ENCODE measurements at regions of chr7 and their contacts with region 1.

Region 1: DNA sequence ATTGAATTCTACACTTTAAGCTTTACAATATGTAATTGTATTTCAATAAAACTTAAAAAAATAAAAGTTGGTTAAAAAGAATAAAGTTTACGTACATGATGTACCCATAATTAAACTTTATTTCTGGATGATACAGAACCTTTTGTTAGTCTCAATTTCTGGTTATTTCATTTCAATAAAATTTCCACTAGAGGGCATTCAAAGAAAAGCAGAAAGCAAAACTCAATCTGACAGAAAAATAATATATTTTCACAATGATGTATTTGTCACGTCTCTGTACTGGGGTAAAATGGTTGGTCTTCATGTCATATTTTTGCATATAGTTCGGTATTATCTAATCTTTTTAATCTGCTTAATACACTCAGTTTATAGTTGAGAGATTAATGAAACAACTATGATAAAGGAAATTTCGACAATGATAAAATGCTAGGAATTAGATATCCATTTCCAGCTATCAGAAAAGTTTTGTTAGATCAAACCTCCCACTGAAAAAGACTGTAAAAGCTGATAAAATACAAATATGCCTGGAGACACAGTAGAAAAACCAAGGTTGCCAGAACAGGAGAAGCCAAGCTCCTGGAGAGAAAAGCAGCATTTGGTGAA is 27.4 kb downstream of the ASZ1 start:
- DNase-seq: no peak
- H3K4me3 ChIP-seq: no peak overlapping the region
- H3K4me3 Mint-ChIP-seq: no peak overlapping the region
- H3K27ac Mint-ChIP-seq: no peak overlapping the region
- H3K4me1 ChIP-seq: peaks cover 11% of the 10 kb centered on the region
- H3K4me1 Mint-ChIP-seq: peaks cover 7% of the 10 kb centered on the region
- H3K27me3 ChIP-seq: no peaks in the 10 kb centered on the region
- H3K27me3 Mint-ChIP-seq: no peaks in the 10 kb centered on the region
- CTCF ChIP-seq: peak; percentile 28 to 48

Region 2: DNA sequence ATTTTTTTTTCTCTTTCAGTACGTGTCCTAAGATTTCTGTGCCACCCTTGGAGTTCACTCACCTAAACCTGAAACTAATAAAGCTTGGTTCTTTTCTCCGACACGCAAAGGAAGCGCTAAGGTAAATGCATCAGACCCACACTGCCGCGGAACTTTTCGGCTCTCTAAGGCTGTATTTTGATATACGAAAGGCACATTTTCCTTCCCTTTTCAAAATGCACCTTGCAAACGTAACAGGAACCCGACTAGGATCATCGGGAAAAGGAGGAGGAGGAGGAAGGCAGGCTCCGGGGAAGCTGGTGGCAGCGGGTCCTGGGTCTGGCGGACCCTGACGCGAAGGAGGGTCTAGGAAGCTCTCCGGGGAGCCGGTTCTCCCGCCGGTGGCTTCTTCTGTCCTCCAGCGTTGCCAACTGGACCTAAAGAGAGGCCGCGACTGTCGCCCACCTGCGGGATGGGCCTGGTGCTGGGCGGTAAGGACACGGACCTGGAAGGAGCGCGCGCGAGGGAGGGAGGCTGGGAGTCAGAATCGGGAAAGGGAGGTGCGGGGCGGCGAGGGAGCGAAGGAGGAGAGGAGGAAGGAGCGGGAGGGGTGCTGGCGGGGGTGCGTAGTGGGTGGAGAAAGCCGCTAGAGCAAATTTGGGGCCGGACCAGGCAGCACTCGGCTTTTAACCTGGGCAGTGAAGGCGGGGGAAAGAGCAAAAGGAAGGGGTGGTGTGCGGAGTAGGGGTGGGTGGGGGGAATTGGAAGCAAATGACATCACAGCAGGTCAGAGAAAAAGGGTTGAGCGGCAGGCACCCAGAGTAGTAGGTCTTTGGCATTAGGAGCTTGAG is 79.5 kb after region 1 on chr7 and contains the start of gene CFTR:
- CTCF ChIA-PET with region 1: no interaction called
- POLR2A ChIA-PET with region 1: no interaction called
- intact Hi-C with region 1: loop called (anchors 2 kb)
- DNase-seq: peak; percentile 72 to 79
- H3K4me3 ChIP-seq: peak within 1 kb of the TSS; percentile 82
- H3K4me3 Mint-ChIP-seq: peak within 1 kb of the TSS; percentile 93
- H3K27ac Mint-ChIP-seq: peak within 1 kb of the TSS; percentile 87
- H3K4me1 ChIP-seq: peaks cover 25% of the 10 kb centered on the region; the same call in 1 of the 2 replicates
- H3K4me1 Mint-ChIP-seq: peaks cover 28% of the 10 kb centered on the region
- H3K27me3 ChIP-seq: no peaks in the 10 kb centered on the region
- H3K27me3 Mint-ChIP-seq: no peaks in the 10 kb centered on the region
- CTCF ChIP-seq: no peak
- total RNA-seq, gene CFTR: 130 and 132 TPM in 2 replicates

Region 3: DNA sequence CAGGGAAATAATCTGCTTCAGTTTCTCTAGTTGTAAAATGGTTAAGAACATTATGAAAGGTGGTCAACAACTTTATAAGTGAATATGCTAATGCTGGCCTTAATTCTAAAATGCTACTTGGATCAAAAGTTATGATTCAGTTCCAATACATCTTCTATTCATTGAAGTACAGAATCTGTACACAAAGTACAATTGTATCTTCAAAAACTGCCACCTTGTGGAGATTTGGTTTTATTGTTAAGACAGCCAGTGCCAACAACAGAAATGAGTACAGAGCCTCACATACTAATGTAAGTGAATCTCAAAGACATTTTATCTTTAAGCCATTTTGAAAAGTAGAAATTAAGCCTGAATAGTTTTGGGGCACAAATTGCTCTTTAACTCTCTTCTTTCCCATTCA is 273.9 kb after region 1 on chr7:
- CTCF ChIA-PET with region 1: interaction called, 3 read pairs
- POLR2A ChIA-PET with region 1: no interaction called
- intact Hi-C with region 1: loop called (anchors 5 kb)
- DNase-seq: peak in 1 of 2 experiments; percentile 39
- H3K4me3 ChIP-seq: no peak overlapping the region
- H3K4me3 Mint-ChIP-seq: peak overlapping the region; percentile 65
- H3K27ac Mint-ChIP-seq: peak overlapping the region; percentile 87
- H3K4me1 ChIP-seq: peaks cover 60% of the 10 kb centered on the region
- H3K4me1 Mint-ChIP-seq: peaks cover 59% of the 10 kb centered on the region
- H3K27me3 ChIP-seq: no peaks in the 10 kb centered on the region
- H3K27me3 Mint-ChIP-seq: no peaks in the 10 kb centered on the region
- CTCF ChIP-seq: peak; percentile 22 to 46

Region 4: DNA sequence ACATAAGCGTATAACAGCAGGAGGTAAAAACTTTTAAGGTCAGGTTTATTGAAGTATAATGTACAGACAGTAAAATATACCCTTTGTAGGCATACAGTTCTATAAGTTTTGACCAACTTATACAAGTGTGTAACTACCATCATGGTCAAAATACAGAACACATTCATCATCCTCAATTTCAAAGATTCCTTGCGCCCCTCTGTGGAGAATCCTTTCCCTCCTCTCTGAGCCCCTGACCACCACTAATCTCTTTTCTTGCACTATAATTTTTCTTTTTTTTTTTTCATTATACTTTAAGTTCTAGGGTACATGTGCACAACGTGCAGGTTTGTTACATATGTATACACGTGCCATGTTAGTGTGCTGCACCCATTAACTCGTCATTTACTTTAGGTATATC is 531.4 kb after region 1 on chr7:
- CTCF ChIA-PET with region 1: no interaction called
- POLR2A ChIA-PET with region 1: no interaction called
- intact Hi-C with region 1: loop called (anchors 2 kb)
- DNase-seq: no peak
- H3K4me3 ChIP-seq: no peak overlapping the region
- H3K4me3 Mint-ChIP-seq: no peak overlapping the region
- H3K27ac Mint-ChIP-seq: no peak overlapping the region
- H3K4me1 ChIP-seq: no peaks in the 10 kb centered on the region
- H3K4me1 Mint-ChIP-seq: no peaks in the 10 kb centered on the region
- H3K27me3 ChIP-seq: no peaks in the 10 kb centered on the region
- H3K27me3 Mint-ChIP-seq: no peaks in the 10 kb centered on the region
- CTCF ChIP-seq: no peak

Region 5: DNA sequence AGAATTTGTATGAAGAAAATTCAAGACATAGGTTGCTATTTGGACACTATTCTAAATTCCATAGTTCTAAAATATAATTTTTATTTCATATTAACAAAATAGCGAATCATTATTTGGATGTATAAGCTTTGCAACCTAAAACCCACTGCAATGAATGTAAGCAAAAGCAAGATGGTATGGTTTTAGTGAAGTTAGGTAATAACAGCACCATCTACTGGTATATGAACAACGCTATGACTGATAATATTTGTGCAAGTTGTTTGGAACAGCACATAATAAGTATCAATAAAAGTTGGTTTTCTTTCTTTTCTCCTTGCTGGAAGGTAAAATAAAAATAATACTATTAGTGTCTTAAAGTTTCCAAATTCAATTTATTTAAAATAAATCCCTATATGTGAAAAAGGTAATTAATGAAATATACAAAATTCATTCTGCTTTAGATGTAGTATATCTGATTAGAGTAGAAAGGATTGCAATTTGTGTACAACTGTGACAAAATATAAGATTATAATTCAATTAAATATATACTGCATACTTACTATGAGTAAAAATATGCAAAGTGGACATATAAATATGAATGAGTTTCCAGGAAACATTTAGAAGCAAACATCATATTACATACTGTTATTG is 705.0 kb after region 1 on chr7:
- CTCF ChIA-PET with region 1: no interaction called
- POLR2A ChIA-PET with region 1: no interaction called
- intact Hi-C with region 1: loop called (anchors 2 kb)
- DNase-seq: peak in 1 of 2 experiments; percentile 7
- H3K4me3 ChIP-seq: no peak overlapping the region
- H3K4me3 Mint-ChIP-seq: no peak overlapping the region
- H3K27ac Mint-ChIP-seq: no peak overlapping the region
- H3K4me1 ChIP-seq: no peaks in the 10 kb centered on the region
- H3K4me1 Mint-ChIP-seq: no peaks in the 10 kb centered on the region
- H3K27me3 ChIP-seq: no peaks in the 10 kb centered on the region
- H3K27me3 Mint-ChIP-seq: peaks cover 2% of the 10 kb centered on the region
- CTCF ChIP-seq: peak in 1 of 2 experiments; percentile 43

Region 6: GRCh38 chr7:118153551-118154177 is 753.7 kb after region 1 on chr7:
- CTCF ChIA-PET with region 1: no interaction called
- POLR2A ChIA-PET with region 1: no interaction called
- intact Hi-C with region 1: loop called (anchors 1 kb)
- DNase-seq: peak in 1 of 2 experiments; percentile 48
- H3K4me3 ChIP-seq: no peak overlapping the region
- H3K4me3 Mint-ChIP-seq: no peak overlapping the region
- H3K27ac Mint-ChIP-seq: no peak overlapping the region
- H3K4me1 ChIP-seq: no peaks in the 10 kb centered on the region
- H3K4me1 Mint-ChIP-seq: no peaks in the 10 kb centered on the region
- H3K27me3 ChIP-seq: no peaks in the 10 kb centered on the region
- H3K27me3 Mint-ChIP-seq: peaks cover 23% of the 10 kb centered on the region
- CTCF ChIP-seq: peak; percentile 38 to 76

Region 7: DNA sequence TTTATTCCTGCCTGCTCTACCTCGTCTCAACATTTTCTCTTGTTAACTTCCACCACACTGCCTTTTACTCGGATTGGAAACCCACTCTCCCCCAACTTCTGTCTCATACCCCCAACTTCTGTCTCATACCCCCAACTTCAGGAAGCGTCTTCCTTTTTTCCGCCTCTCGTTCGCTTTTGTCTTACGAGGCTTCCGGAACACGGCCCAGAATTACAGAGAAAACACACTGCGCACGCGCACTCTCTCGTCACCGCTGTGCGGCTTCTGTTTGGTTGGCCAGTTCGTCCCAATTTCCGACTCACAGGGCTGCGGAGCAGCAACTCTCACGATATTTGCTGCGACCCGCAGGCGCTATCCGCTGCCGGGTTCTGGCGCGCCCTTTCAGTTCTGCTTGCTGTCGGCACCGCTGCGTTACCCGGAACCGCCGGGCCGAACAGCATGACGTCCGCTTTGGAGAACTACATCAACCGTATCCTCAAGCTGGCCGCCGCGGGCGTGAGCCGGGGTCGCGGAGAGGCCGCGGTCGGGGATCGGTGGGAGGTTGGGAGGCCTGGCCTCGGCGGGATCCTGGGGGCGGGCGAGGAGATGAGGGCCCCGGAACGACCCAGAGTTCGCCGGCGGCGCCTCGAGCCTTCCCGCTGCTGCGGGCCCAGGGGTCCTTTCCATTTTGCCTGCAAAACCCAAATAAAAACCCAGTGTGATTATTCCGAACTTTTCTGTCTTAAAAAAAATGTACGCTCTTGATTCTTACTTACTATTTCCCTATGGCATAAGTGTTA is 784.1 kb after region 1 on chr7 and contains the start of gene LSM8:
- CTCF ChIA-PET with region 1: no interaction called
- POLR2A ChIA-PET with region 1: no interaction called
- intact Hi-C with region 1: loop called (anchors 10 kb)
- DNase-seq: peak; percentile 97
- H3K4me3 ChIP-seq: peak within 1 kb of the TSS; percentile 75
- H3K4me3 Mint-ChIP-seq: peak within 1 kb of the TSS; percentile 89
- H3K27ac Mint-ChIP-seq: peak within 1 kb of the TSS; percentile 98
- H3K4me1 ChIP-seq: peaks cover 8% of the 10 kb centered on the region; the same call in 1 of the 2 replicates
- H3K4me1 Mint-ChIP-seq: peaks cover 12% of the 10 kb centered on the region
- H3K27me3 ChIP-seq: no peaks in the 10 kb centered on the region
- H3K27me3 Mint-ChIP-seq: no peaks in the 10 kb centered on the region
- CTCF ChIP-seq: no peak
- total RNA-seq, gene LSM8: 47.4 and 50.4 TPM in 2 replicates

Measured in Caco-2 (cell line).